ENCODE measurements at regions of chr3 and their contacts with region 1.

Region 1: GRCh38 chr3:39000008-39000450 is 51.7 kb downstream of the SCN11A start:
- DNase-seq: peak; percentile 21
- H3K4me3 ChIP-seq: no peak overlapping the region
- H3K27ac ChIP-seq: no peak overlapping the region
- H3K27me3 ChIP-seq: peaks cover 4% of the 10 kb centered on the region
- CTCF ChIP-seq: peak; percentile 95

Region 2: GRCh38 chr3:37892927-37893600 is 1107.0 kb before region 1 on chr3:
- CTCF ChIA-PET with region 1: no interaction called
- POLR2A ChIA-PET with region 1: no interaction called
- DNase-seq: no peak
- H3K4me3 ChIP-seq: no peak overlapping the region
- H3K27ac ChIP-seq: no peak overlapping the region
- H3K27me3 ChIP-seq: no peaks in the 10 kb centered on the region
- CTCF ChIP-seq: no peak

Region 3: DNA sequence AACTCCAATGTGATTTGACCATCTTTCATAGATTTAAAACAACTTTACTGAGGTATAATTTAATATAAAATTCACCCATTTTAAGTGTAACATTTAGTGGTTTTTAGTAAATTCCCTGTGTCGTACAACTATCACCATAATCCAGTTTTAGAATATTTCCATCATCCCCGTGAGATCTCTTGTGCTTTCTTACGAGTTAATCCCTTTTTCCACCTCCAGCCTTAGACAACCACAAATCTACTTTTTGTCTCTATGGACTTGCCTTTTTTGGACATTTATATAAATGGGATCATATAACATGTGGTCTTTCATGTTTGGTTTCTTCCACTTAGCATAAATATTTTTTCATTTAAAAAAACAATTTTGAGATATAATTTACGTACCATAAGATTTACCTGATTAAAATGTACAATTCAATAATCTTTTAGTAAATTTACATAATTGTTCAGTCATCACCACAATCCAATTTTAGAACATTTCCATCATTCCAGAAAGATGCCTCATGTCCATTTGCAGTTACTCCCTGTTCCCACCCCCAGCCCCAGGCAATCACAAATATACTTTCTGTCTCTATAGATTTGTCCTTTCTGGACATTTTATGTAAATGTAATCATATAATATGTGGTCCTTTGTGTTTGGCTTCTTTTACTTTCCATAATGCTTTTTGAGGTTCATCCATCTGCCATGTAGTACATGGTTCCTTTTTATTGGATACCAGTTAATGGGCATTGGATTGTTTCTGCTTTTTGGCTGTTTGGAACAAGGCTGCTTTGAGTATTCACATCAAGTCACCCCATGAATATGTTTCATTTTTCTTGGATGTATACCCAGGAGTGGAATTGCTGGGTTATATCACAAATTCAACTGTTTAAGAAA is 831.6 kb before region 1 on chr3:
- CTCF ChIA-PET with region 1: no interaction called
- POLR2A ChIA-PET with region 1: no interaction called
- DNase-seq: no peak
- H3K4me3 ChIP-seq: peak overlapping the region; percentile 10; the same call in 1 of the 2 replicates
- H3K27ac ChIP-seq: peak overlapping the region; percentile 42
- H3K27me3 ChIP-seq: no peaks in the 10 kb centered on the region
- CTCF ChIP-seq: no peak

Region 4: DNA sequence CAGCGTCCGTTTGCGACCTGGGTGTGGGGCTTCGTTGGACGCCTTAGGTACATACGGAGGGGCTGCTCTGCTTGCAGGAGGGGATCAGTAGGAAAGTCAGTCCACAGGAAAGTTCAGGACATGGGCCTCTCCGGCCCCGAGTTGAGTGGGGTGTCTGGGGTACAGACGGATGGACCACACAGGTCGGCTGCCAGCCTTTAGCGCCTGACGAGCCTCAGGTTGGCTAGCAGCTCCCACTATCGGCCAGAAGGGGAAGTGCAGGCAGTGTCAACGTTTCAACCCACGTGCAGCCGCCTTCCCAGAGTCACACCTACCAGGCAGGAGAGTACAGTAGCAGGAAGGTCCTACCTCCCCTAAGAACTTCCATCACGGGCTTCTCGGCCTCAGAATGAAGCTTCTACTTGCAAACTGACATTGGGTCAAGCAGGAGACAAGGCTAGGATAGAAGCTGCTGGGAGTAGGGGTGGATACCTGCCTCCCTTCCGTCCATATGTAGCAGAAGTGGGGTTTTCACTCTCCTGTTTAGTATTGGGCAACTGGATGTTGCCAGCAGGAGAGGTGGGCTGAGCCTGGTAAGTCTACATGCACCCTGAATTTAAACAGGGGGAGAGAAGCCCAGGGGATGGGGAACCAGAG is 348.8 kb before region 1 on chr3:
- CTCF ChIA-PET with region 1: interaction called, 13 read pairs
- POLR2A ChIA-PET with region 1: no interaction called
- DNase-seq: peak; percentile 18
- H3K4me3 ChIP-seq: no peak overlapping the region
- H3K27ac ChIP-seq: no peak overlapping the region
- H3K27me3 ChIP-seq: peaks cover 30% of the 10 kb centered on the region
- CTCF ChIP-seq: peak; percentile 98

Region 5: GRCh38 chr3:38738630-38739395 is 261.2 kb before region 1 on chr3:
- CTCF ChIA-PET with region 1: interaction called, 12 read pairs
- POLR2A ChIA-PET with region 1: no interaction called
- DNase-seq: no peak
- H3K4me3 ChIP-seq: no peak overlapping the region
- H3K27ac ChIP-seq: no peak overlapping the region
- H3K27me3 ChIP-seq: peaks cover 2% of the 10 kb centered on the region
- CTCF ChIP-seq: peak; percentile 66

Region 6: GRCh38 chr3:38960953-38961622 is 38.9 kb before region 1 on chr3:
- CTCF ChIA-PET with region 1: interaction called, 47 read pairs
- POLR2A ChIA-PET with region 1: no interaction called
- DNase-seq: no peak
- H3K4me3 ChIP-seq: no peak overlapping the region
- H3K27ac ChIP-seq: no peak overlapping the region
- H3K27me3 ChIP-seq: peaks cover 2% of the 10 kb centered on the region
- CTCF ChIP-seq: peak; percentile 79

Region 7: GRCh38 chr3:38985581-38985980 is 14.4 kb before region 1 on chr3:
- CTCF ChIA-PET with region 1: interaction called, 12 read pairs
- POLR2A ChIA-PET with region 1: no interaction called
- DNase-seq: no peak
- H3K4me3 ChIP-seq: no peak overlapping the region
- H3K27ac ChIP-seq: peak overlapping the region; percentile 33
- H3K27me3 ChIP-seq: no peaks in the 10 kb centered on the region
- CTCF ChIP-seq: no peak

Region 8: DNA sequence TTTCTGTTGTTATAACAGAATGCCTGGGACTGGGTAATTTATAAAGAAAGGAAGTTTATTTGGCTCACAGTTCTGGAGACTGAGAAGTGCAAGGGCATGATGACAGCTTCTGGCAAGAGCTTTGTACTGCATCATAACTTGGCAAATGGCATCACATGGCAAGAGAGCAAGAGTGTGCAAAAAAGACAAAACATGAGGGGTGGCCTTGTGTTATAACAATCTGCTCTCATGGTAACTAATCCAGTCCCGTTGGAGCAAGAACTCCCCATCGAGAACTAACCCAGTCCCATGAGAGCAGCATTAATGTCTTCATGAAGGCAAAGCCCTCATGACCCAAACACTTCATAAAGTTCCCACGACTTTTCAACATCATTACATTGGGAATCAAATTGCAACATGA is 28.5 kb after region 1 on chr3:
- CTCF ChIA-PET with region 1: interaction called, 36 read pairs
- POLR2A ChIA-PET with region 1: no interaction called
- DNase-seq: no peak
- H3K4me3 ChIP-seq: no peak overlapping the region
- H3K27ac ChIP-seq: no peak overlapping the region
- H3K27me3 ChIP-seq: peaks cover 4% of the 10 kb centered on the region
- CTCF ChIP-seq: no peak

Region 9: DNA sequence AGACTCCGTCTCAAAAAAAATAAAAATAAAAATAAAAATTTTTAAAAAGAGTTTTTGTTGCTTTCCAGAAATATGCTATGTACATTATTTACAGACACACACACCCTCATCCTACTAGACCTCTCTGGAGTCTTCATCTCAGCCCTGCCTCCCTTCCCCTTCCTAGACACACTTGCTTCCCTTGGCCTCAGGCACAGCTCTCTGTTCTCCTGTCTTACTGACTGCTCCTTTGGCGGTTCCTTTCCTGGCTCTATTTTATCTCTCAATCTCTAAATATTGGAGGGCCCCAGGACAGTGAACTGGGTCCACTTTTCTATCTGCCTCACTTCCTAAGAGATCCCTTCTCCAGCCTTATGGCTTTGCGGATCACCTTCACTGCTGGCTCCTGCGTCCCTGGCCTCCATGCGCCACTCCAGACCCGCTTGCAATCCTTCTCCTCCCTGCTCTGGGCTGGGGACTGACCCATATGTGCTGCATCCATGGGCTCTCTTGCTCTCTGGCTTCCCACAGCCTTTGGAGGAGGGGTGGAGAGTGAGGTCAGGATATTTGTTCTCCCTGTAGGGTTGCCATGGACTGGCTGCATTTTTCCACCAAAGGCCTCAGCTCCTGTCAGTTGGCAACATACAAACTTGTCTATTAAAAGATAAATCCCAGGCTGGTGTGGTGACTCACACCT is 174.9 kb after region 1 on chr3:
- CTCF ChIA-PET with region 1: no interaction called
- POLR2A ChIA-PET with region 1: no interaction called
- DNase-seq: no peak
- H3K4me3 ChIP-seq: no peak overlapping the region
- H3K27ac ChIP-seq: no peak overlapping the region
- H3K27me3 ChIP-seq: no peaks in the 10 kb centered on the region
- CTCF ChIP-seq: no peak

Region 10: DNA sequence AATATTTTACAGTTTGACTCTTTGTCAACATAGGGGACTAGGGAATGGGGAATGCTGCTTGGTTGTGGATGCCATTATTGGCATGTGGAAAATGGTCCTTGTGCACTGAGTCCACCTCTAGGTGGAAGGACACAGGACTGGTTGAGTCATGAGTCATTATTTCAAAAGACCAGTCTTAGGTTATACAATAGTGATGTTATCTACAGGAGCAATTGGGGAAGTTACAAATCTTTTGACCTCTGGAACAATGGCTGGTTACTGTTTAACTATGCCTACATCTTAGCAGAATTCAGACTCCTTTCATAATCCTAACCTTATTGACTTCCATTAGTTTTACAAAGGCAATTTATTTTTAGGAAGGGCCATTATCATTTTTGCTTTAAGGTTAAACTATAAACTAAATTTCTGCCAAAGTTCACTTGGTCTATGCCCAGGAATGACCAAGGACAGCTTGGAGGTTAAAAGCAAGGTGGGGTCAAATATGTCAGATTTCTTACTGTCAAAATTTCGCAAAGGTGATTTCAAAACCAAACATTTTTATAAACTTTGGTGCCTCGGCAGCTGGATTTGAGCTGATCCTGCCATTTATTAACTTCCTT is 317.6 kb after region 1 on chr3:
- CTCF ChIA-PET with region 1: no interaction called
- POLR2A ChIA-PET with region 1: no interaction called
- DNase-seq: no peak
- H3K4me3 ChIP-seq: no peak overlapping the region
- H3K27ac ChIP-seq: no peak overlapping the region
- H3K27me3 ChIP-seq: no peaks in the 10 kb centered on the region
- CTCF ChIP-seq: no peak

Measured in AG04450 (cell line).